ENCODE measurements at regions of chr3 and their contacts with region 1.

Region 1: DNA sequence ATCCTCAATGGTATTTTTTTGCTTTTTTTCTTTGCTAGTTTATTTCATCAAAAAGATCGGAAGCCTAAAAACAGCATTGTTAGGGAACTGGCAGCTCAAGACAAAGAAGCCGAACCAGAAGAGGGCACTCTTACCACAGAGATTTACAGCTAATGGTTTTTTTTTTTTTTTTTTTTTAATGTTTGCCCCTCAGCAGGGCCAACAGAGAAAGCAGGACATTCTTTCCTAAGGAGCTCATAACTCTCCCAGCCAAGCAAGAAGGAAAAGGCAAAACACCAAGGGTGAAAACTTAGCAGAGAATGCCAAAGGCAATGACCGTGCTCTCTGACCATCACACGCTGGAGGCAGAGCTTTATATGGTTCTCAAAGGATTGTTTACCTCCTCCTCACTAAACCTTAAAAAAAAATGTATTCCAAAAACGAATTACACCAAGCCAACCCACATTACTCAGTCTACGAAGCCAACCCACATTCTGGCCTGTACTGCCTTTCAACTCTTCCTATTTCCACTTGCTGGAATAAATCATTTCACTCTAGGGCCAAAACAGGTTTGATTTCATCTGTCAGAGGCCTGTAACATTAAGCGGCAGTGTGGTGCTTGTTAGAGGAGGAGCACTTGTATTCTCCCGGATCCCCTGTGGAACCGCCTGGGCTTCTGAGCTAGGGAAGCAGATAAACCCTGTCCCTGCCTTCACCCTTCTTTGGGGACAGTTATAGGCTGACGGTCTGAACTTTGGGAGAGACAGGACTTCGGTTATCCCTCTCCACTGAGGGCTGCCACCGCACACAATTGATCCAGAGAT is 35.6 kb upstream of the GYG1 start:
- DNase-seq: peak in 1 of 2 donors; percentile 66
- ATAC-seq: peak; percentile 94
- H3K4me3 ChIP-seq: peak overlapping the region in 1 of 2 donors; percentile 45
- H3K27ac ChIP-seq: peak overlapping the region; percentile 100
- H3K4me1 ChIP-seq: peaks cover 0 to 6% of the 10 kb centered on the region in 2 donors
- H3K27me3 ChIP-seq: no peaks in the 10 kb centered on the region

Region 2: GRCh38 chr3:148911173-148911572 is 44.6 kb before region 1 on chr3:
- intact Hi-C with region 1: no loop called
- DNase-seq: no peak
- ATAC-seq: no peak
- H3K4me3 ChIP-seq: no peak overlapping the region
- H3K27ac ChIP-seq: no peak overlapping the region
- H3K4me1 ChIP-seq: no peaks in the 10 kb centered on the region
- H3K27me3 ChIP-seq: no peaks in the 10 kb centered on the region

Region 3: GRCh38 chr3:148991194-148992026 is 35.7 kb after region 1 on chr3 and contains the start of gene GYG1:
- intact Hi-C with region 1: loop called (anchors 5 kb)
- DNase-seq: peak; percentile 90 to 95
- ATAC-seq: peak; percentile 94
- H3K4me3 ChIP-seq: peak within 1 kb of the TSS; percentile 82 to 93
- H3K27ac ChIP-seq: peak within 1 kb of the TSS; percentile 71 to 91
- H3K4me1 ChIP-seq: peaks cover 0 to 10% of the 10 kb centered on the region in 2 donors
- H3K27me3 ChIP-seq: no peaks in the 10 kb centered on the region
- total RNA-seq, gene GYG1: 67.3 to 91.7 TPM

Region 4: DNA sequence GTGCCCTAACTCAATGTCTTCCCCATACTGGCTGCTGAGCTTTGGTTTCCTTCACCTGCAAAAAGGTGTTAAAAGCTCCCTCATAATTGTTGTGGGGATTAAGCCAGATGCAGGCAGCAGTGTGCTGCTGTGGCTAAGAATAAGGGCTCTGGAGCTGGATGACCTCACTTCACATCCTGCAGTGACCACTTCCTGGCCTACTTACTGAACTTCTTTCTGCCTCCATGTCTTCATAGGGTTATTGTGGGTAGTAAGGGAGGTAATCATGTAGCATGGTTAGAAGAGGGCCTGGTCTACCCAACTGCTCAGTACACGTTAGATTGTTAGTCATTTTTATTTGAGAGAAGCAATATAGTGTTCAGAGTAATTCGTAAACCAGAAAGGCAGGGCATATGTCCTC is 54.0 kb after region 1 on chr3:
- intact Hi-C with region 1: loop called in 1 of 2 experiments (anchors 10 kb)
- DNase-seq: no peak
- ATAC-seq: no peak
- H3K4me3 ChIP-seq: no peak overlapping the region
- H3K27ac ChIP-seq: peak overlapping the region in 1 of 2 donors; percentile 30
- H3K4me1 ChIP-seq: no peaks in the 10 kb centered on the region
- H3K27me3 ChIP-seq: no peaks in the 10 kb centered on the region

Region 5: GRCh38 chr3:149095487-149095886 is 139.7 kb after region 1 on chr3:
- intact Hi-C with region 1: no loop called
- DNase-seq: no peak
- ATAC-seq: no peak
- H3K4me3 ChIP-seq: no peak overlapping the region
- H3K27ac ChIP-seq: no peak overlapping the region
- H3K4me1 ChIP-seq: no peaks in the 10 kb centered on the region
- H3K27me3 ChIP-seq: no peaks in the 10 kb centered on the region

Region 6: DNA sequence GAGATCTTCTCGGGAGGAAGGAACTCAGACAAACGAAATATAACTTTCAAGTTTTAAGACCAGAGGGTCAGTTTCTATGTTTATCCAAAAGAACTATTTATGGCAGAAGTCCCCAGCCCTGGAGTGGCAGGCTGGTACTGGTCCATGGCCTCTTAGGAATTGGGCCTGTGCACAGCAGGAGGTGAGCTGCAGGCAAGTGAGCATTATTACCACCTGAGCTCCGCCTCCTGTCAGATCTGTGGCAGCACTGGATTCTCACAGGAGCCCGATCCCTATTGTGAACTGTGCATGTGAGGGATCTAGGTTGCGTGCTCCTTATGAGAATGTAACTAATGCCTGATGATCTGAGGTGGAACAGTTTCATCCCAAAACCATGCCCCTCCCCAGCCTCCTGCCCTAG is 159.4 kb after region 1 on chr3:
- intact Hi-C with region 1: loop called in 1 of 2 experiments (anchors 5 kb)
- DNase-seq: no peak
- ATAC-seq: peak; percentile 40
- H3K4me3 ChIP-seq: no peak overlapping the region
- H3K27ac ChIP-seq: peak overlapping the region; percentile 59 to 96
- H3K4me1 ChIP-seq: peaks cover 0 to 9% of the 10 kb centered on the region in 2 donors
- H3K27me3 ChIP-seq: no peaks in the 10 kb centered on the region

Region 7: GRCh38 chr3:149273096-149273751 is 317.5 kb after region 1 on chr3:
- intact Hi-C with region 1: loop called (anchors 1 to 2 kb)
- DNase-seq: no peak
- ATAC-seq: peak; percentile 92
- H3K4me3 ChIP-seq: no peak overlapping the region
- H3K27ac ChIP-seq: no peak overlapping the region
- H3K4me1 ChIP-seq: no peaks in the 10 kb centered on the region
- H3K27me3 ChIP-seq: no peaks in the 10 kb centered on the region

Region 8: DNA sequence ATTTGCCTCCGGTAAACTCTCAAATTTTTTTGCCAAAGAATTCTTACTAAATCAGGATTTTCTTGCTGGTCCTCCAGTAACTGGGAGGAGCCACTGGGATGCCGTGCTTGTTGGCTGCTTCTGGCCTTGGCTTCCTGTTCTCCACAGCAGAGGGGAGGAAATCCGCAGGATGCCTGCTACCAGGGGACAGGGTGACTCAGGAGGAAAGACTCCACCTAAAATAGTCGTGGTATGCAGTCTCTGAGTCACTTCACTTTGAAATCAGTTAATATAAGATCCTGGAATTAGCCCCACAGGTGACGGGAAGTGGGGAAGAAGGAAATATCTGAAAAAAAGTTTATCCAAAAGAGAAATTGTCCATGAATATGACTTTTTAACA is 384.2 kb after region 1 on chr3:
- intact Hi-C with region 1: loop called in 1 of 2 experiments (anchors 5 kb)
- DNase-seq: peak; percentile 92 to 94
- ATAC-seq: peak; percentile 95
- H3K4me3 ChIP-seq: no peak overlapping the region
- H3K27ac ChIP-seq: peak overlapping the region; percentile 80 to 95
- H3K4me1 ChIP-seq: peaks cover 2 to 6% of the 10 kb centered on the region in 2 donors
- H3K27me3 ChIP-seq: no peaks in the 10 kb centered on the region